PC-9 (cell line): ENCODE measurements at regions of chr1 and their contacts with region 1.

Region 1: GRCh38 chr1:113978863-113979702 is at the start of gene OLFML3:
- DNase-seq: peak; percentile 67 to 85
- H3K4me3 ChIP-seq: peak within 1 kb of the TSS; percentile 45; the same call in 1 of the 2 replicates
- H3K27ac ChIP-seq: peak within 1 kb of the TSS; percentile 79
- H3K4me1 ChIP-seq: peaks cover 16% of the 10 kb centered on the region
- H3K27me3 ChIP-seq: no peaks in the 10 kb centered on the region
- CTCF ChIP-seq: peak; percentile 94
- total RNA-seq, gene OLFML3: 0.45 and 0.52 TPM in 2 replicates

Region 2: DNA sequence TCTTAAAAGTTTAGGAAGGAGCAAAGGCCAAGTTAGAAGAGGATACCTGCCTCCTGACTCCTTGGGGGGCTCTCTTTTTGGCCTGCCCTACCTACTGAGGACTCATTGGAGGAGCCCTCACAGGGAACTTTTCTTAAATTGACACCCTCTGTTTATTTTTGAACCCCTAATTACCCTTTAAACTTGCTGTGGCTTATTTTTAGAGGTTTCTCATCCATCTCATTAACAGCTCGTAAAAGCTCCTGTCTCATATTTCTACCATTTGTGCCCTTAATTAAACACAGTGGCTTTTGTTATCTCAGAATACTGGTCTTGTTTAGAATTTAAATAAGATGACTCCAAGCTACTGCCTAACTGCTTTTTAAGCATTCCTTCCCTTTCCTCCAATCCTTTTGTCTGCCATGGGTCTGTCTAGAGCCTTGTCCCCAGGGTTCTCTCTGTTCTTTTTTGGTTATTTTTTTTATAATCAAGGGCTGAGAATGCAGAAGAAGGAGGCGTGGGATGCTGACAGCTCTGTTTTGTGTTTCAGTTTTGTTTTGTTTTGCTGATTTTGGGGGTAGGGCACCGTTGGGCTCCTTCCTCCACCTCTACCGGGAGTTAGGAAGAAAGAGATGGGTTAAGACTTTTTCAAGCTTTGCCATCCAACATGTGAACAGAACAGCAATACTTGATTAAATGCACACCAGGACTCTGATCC is 96.6 kb after region 1 on chr1:
- CTCF ChIA-PET with region 1: no interaction called
- POLR2A ChIA-PET with region 1: no interaction called
- intact Hi-C with region 1: no loop called
- DNase-seq: no peak
- H3K4me3 ChIP-seq: no peak overlapping the region
- H3K27ac ChIP-seq: no peak overlapping the region
- H3K4me1 ChIP-seq: peaks cover 28% of the 10 kb centered on the region
- H3K27me3 ChIP-seq: no peaks in the 10 kb centered on the region
- CTCF ChIP-seq: no peak

Region 3: GRCh38 chr1:114219172-114219868 is 240.2 kb after region 1 on chr1:
- CTCF ChIA-PET with region 1: no interaction called
- POLR2A ChIA-PET with region 1: no interaction called
- intact Hi-C with region 1: loop called (anchors 1 kb)
- DNase-seq: peak in 1 of 2 experiments; percentile 2
- H3K4me3 ChIP-seq: no peak overlapping the region
- H3K27ac ChIP-seq: no peak overlapping the region
- H3K4me1 ChIP-seq: no peaks in the 10 kb centered on the region
- H3K27me3 ChIP-seq: no peaks in the 10 kb centered on the region
- CTCF ChIP-seq: peak; percentile 58

Region 4: DNA sequence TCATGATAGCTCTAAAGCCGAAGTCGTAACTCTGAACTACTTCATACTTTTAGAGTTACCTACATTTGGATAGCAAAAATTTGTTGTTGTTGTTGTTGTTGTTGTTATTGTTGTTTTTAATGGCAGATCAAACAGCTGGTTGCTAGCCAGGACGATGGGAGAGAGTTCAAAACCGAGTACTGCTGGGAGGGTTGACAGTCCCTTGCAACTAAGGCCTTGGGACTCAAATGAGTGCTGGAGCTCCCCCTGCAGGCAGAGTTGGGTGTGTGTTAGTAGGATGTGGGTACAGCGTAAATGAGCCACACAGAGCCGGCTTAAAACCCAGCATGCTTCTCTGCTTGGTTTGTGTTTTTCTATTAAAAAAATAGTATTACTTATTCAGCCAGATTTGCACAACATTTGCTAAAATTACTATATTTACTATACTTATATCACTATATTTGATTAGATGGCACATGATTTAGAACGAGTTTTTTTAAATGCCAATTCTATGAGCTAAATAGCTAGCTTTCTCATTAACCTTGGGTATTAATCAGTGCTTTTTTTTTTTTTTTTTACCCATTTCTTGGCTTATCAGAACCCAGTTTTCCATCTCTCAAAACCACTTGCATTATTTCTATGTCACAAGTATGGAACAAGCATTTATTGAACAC is 303.8 kb after region 1 on chr1:
- CTCF ChIA-PET with region 1: interaction called, 11 read pairs
- POLR2A ChIA-PET with region 1: no interaction called
- intact Hi-C with region 1: loop called (anchors 1 kb)
- DNase-seq: peak; percentile 70 to 71
- H3K4me3 ChIP-seq: no peak overlapping the region
- H3K27ac ChIP-seq: no peak overlapping the region
- H3K4me1 ChIP-seq: no peaks in the 10 kb centered on the region
- H3K27me3 ChIP-seq: no peaks in the 10 kb centered on the region
- CTCF ChIP-seq: peak; percentile 98